Naive thymus-derived CD4-positive, alpha-beta T cell (primary cell): ENCODE measurements at regions of chr12 and their contacts with region 1.

Region 1: DNA sequence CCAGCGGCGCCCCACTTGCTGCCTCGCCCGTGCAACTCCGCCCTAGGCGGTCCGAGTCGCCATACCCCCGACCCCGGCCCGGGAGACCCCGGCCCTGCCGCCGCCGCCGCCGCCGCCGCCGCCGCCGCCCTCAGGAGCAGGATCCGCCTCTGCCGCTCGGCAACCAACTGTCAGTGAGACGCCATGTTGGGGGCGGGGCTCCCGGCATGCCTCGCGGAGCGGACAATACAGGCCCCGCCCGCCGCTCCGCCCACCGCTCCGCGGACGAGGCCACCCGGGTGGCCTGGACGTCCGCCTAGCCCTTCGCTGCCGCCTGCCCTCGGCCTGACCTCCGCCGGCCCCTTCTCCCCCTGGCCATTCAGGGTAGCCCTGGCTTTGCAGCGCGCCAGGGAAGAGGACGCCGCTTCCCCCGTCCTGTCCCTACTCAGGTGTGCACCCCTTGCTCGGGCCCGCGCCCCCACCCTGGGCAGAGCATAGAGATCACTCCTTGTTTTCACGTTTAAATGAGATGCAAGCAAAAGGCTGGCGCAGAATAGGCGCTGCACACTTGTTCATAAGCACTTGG is at the start of gene HECTD4:
- DNase-seq: peak; percentile 83 to 97 (median 88)
- ATAC-seq: peak; percentile 100
- H3K4me3 ChIP-seq: peak within 1 kb of the TSS; percentile 81
- H3K4me3 Mint-ChIP-seq: peak within 1 kb of the TSS; percentile 92 to 99 (median 95)
- H3K27ac ChIP-seq: peak within 1 kb of the TSS; percentile 76
- H3K27ac Mint-ChIP-seq: peak within 1 kb of the TSS; percentile 81 to 96 (median 91)
- H3K4me1 ChIP-seq: peaks cover 6 to 15% of the 10 kb centered on the region in 2 donors
- H3K4me1 Mint-ChIP-seq: peaks cover 11 to 32% (median 28%) of the 10 kb centered on the region in 7 donors
- H3K27me3 ChIP-seq: no peaks in the 10 kb centered on the region
- H3K27me3 Mint-ChIP-seq: peaks cover 0 to 2% (median under 1%) of the 10 kb centered on the region in 5 donors
- total RNA-seq, gene HECTD4: 44.9 to 57.7 (median 51.4) TPM

Region 2: DNA sequence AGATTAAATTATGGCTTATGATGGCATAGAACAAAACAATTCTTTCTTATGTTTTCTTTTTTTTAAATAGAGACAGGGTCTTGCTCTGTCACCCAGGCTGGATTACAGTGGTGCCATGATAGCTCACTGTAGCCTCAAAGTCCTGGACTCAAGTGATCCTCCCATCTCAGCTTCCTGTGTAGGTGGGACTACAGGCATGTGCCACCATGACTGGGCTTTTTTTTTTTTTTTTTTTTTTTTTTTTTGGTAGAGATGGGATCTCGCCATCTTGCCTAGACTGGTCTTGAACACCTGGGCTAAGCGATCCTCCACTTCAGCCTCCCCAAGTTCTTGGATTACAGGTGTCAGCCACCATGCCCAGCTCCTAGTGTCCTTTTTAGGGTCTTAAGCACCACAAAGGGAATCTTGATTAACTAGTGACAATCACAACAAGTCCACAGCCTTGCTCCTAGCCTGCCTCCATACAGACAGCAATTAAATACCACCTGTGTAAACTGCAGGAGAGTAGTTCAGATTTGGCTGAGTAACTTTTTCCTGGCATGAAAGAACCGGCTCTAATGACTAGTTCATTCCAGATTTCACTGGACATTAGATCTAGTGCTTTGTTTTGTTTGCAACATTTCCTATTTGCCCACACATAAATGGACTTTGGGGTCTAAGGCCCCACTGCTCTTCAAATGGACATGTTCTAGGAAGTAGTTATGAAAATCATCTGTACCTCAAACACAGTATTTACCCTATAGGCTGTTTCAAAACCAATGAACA is 915.0 kb before region 1 on chr12:
- CTCF ChIA-PET with region 1: no interaction called
- POLR2A ChIA-PET with region 1: no interaction called
- intact Hi-C with region 1: no loop called
- DNase-seq: no peak
- ATAC-seq: no peak
- H3K4me3 ChIP-seq: no peak overlapping the region
- H3K4me3 Mint-ChIP-seq: no peak overlapping the region
- H3K27ac ChIP-seq: no peak overlapping the region
- H3K27ac Mint-ChIP-seq: peak overlapping the region in 1 of 9 donors; percentile 38
- H3K4me1 ChIP-seq: no peaks in the 10 kb centered on the region
- H3K4me1 Mint-ChIP-seq: peaks cover 0 to 7% (median 5%) of the 10 kb centered on the region in 7 donors
- H3K27me3 ChIP-seq: no peaks in the 10 kb centered on the region
- H3K27me3 Mint-ChIP-seq: no peaks in the 10 kb centered on the region

Region 3: DNA sequence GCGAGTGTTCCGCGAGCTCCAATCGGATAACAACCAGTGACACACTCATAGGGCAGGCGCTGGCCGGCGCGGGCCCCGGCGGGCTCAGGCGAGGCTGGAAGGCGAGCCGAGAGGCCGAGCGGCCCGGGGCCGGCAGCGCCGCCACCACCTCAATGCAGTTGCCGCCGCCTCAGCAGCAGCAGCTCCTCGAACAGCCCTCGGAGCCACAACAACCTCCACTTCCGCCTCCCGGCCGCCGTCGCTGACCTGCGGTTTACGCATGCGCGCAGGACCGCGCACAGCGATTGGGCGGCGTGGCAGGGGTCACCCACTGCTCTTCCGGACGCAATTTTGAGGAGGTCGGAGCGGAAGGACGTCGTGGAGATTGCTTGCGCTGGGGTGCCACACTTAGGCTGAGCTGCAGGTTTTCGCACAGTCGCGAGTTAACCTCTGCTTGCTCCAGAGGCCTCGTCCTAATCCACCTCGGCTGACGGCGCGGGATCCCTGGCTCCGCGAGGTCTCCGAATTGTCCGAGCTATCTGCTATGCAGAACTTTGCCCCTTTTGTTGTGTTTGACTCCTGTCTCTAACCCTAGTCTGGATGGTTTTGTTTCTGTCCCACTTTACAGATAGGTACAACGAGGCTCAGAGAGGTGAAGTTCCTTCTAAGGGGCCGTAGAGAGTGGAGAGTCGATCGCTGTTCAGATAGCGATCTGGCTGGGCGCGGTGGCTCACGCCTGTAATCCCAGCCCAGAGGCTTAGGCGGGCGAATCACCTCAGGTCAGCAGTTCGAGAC is 696.4 kb before region 1 on chr12 and contains the starts of genes ACAD10 and BRAP:
- CTCF ChIA-PET with region 1: no interaction called
- POLR2A ChIA-PET with region 1: no interaction called
- intact Hi-C with region 1: loop called in 1 of 2 experiments (anchors 5 kb)
- DNase-seq: peak; percentile 82 to 98 (median 93)
- ATAC-seq: peak; percentile 96
- H3K4me3 ChIP-seq: peak within 1 kb of the TSS; percentile 90
- H3K4me3 Mint-ChIP-seq: peak within 1 kb of the TSS; percentile 90 to 98 (median 96)
- H3K27ac ChIP-seq: peak within 1 kb of the TSS; percentile 83
- H3K27ac Mint-ChIP-seq: peak within 1 kb of the TSS; percentile 90 to 98 (median 96)
- H3K4me1 ChIP-seq: peaks cover 17 to 18% of the 10 kb centered on the region in 2 donors
- H3K4me1 Mint-ChIP-seq: peaks cover 23 to 54% (median 44%) of the 10 kb centered on the region in 7 donors
- H3K27me3 ChIP-seq: no peaks in the 10 kb centered on the region
- H3K27me3 Mint-ChIP-seq: peaks cover 0 to 2% (median 0%) of the 10 kb centered on the region in 5 donors
- total RNA-seq, gene ACAD10: 28.4 to 65.3 (median 36.0) TPM
- total RNA-seq, gene BRAP: 19.5 to 25.5 (median 23.0) TPM

Region 4: GRCh38 chr12:111942557-111942956 is 439.8 kb before region 1 on chr12:
- CTCF ChIA-PET with region 1: no interaction called
- POLR2A ChIA-PET with region 1: no interaction called
- intact Hi-C with region 1: loop called (anchors 1 kb)
- DNase-seq: no peak
- ATAC-seq: no peak
- H3K4me3 ChIP-seq: no peak overlapping the region
- H3K4me3 Mint-ChIP-seq: no peak overlapping the region
- H3K27ac ChIP-seq: no peak overlapping the region
- H3K27ac Mint-ChIP-seq: no peak overlapping the region
- H3K4me1 ChIP-seq: peaks cover 0 to 3% of the 10 kb centered on the region in 2 donors
- H3K4me1 Mint-ChIP-seq: peaks cover 0 to 25% (median 12%) of the 10 kb centered on the region in 7 donors
- H3K27me3 ChIP-seq: no peaks in the 10 kb centered on the region
- H3K27me3 Mint-ChIP-seq: no peaks in the 10 kb centered on the region

Region 5: DNA sequence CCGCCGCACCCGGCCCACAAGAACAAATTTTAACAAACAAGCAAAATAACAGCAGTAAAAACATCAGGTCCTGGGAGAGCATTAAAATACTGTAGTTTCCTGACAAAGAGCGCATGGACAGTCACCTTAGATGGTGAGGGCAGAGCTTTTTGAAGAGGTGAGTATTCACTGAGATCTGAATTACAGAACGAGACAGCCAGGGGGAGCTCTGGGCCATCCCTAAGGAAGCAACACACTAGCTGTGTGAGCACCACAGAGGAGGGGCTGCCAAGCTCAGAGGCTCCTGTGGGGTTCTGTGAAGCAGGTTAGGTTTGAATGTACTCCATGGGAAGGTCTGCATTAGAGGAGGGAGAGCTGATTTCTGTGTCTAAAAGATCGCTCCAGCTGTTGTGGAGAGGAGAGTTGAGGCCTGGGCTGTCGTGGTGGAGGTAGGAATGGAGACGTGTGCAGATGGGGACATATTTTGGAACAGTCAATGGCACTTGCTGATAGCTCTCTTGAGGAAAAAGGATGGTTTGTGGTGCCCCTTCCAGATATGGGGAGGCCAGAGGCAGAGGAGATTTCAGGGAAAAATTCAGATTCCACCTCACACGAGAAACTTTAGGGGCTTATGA is 184.1 kb before region 1 on chr12:
- CTCF ChIA-PET with region 1: interaction called, 18 read pairs
- POLR2A ChIA-PET with region 1: interaction called, 6 read pairs
- intact Hi-C with region 1: loop called in 1 of 2 experiments (anchors 1 kb)
- DNase-seq: peak in 8 of 9 donors; percentile 20 to 45 (median 34)
- ATAC-seq: peak; percentile 81
- H3K4me3 ChIP-seq: no peak overlapping the region
- H3K4me3 Mint-ChIP-seq: no peak overlapping the region
- H3K27ac ChIP-seq: no peak overlapping the region
- H3K27ac Mint-ChIP-seq: peak overlapping the region in 1 of 9 donors; percentile 29
- H3K4me1 ChIP-seq: no peaks in the 10 kb centered on the region
- H3K4me1 Mint-ChIP-seq: peaks cover 0 to 4% (median 0%) of the 10 kb centered on the region in 7 donors
- H3K27me3 ChIP-seq: no peaks in the 10 kb centered on the region
- H3K27me3 Mint-ChIP-seq: no peaks in the 10 kb centered on the region

Region 6: DNA sequence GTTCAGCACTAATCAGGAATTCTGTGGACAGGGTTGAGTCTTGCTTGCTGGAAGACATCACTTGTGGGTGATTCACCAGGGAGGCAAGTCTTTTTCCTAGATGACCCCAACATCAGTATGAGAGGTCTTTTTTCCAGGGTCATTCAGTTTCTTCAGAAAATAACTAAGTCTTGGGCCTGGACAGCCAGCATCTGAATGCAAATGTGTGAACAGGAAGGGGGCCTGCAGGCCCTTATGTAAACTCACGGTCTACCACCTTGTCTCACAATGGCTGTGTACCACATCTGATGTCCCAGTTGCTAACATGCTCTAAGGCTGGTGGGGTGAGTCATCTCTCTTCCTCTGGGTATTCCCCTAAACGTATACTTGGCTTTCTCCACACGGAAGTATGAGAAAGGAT is 79.3 kb before region 1 on chr12:
- CTCF ChIA-PET with region 1: interaction called, 3 read pairs
- POLR2A ChIA-PET with region 1: no interaction called
- intact Hi-C with region 1: loop called in 1 of 2 experiments (anchors 1 kb)
- DNase-seq: peak in 1 of 9 donors; percentile 29
- ATAC-seq: peak; percentile 76
- H3K4me3 ChIP-seq: no peak overlapping the region
- H3K4me3 Mint-ChIP-seq: no peak overlapping the region
- H3K27ac ChIP-seq: no peak overlapping the region
- H3K27ac Mint-ChIP-seq: peak overlapping the region in 2 of 9 donors; percentile 56 to 68
- H3K4me1 ChIP-seq: no peaks in the 10 kb centered on the region
- H3K4me1 Mint-ChIP-seq: peaks cover 0 to 10% (median 0%) of the 10 kb centered on the region in 7 donors
- H3K27me3 ChIP-seq: no peaks in the 10 kb centered on the region
- H3K27me3 Mint-ChIP-seq: no peaks in the 10 kb centered on the region